Panc1 (cell line): ENCODE measurements at regions of chr13 and their contacts with region 1.

Region 1: GRCh38 chr13:75870397-75870903 is 234.3 kb downstream of the LMO7 start:
- DNase-seq: peak; percentile 13
- ATAC-seq: 0 out of 2 replicates have a peak, but pooled peaks have one; percentile 48
- H3K4me3 ChIP-seq: peak overlapping the region; percentile 44 to 65
- H3K27ac ChIP-seq: no peak overlapping the region
- H3K4me1 ChIP-seq: no peaks in the 10 kb centered on the region
- H3K27me3 ChIP-seq: no peaks in the 10 kb centered on the region
- CTCF ChIP-seq: peak; percentile 81

Region 2: GRCh38 chr13:76903544-76904162 is 1033.2 kb after region 1 on chr13:
- CTCF ChIA-PET with region 1: no interaction called
- POLR2A ChIA-PET with region 1: no interaction called
- in situ Hi-C with region 1: no loop called
- intact Hi-C with region 1: loop called (anchors 5 kb)
- DNase-seq: peak; percentile 67
- ATAC-seq: no peak
- H3K4me3 ChIP-seq: no peak overlapping the region
- H3K27ac ChIP-seq: no peak overlapping the region
- H3K4me1 ChIP-seq: no peaks in the 10 kb centered on the region
- H3K27me3 ChIP-seq: no peaks in the 10 kb centered on the region
- CTCF ChIP-seq: peak; percentile 87